SK-N-SH (cell line): ENCODE measurements at regions of chr1 and their contacts with region 1.

Region 1: GRCh38 chr1:91165033-91165654 is 143.3 kb upstream of the ZNF644 start:
- DNase-seq: peak; percentile 74
- H3K4me3 ChIP-seq: no peak overlapping the region; a peak in 1 of 4 replicates
- H3K27ac ChIP-seq: no peak overlapping the region
- H3K4me1 ChIP-seq: no peaks in the 10 kb centered on the region
- H3K27me3 ChIP-seq: no peaks in the 10 kb centered on the region
- CTCF ChIP-seq: peak; percentile 92
- EP300 ChIP-seq: no peak
- RAD21 ChIP-seq: peak; percentile 71

Region 2: GRCh38 chr1:90721210-90722194 is 443.6 kb before region 1 on chr1:
- CTCF ChIA-PET with region 1: interaction called, 18 read pairs
- POLR2A ChIA-PET with region 1: no interaction called
- DNase-seq: peak; percentile 81
- H3K4me3 ChIP-seq: no peak overlapping the region; a peak in 1 of 4 replicates
- H3K27ac ChIP-seq: no peak overlapping the region
- H3K4me1 ChIP-seq: peaks cover 3 to 12% of the 10 kb centered on the region in 2 experiments; a peak in 2 of 4 replicates
- H3K27me3 ChIP-seq: peaks cover 90% of the 10 kb centered on the region
- CTCF ChIP-seq: peak; percentile 85
- EP300 ChIP-seq: no peak
- RAD21 ChIP-seq: peak; percentile 72

Region 3: GRCh38 chr1:91135799-91136198 is 29.3 kb before region 1 on chr1:
- CTCF ChIA-PET with region 1: interaction called, 20 read pairs
- POLR2A ChIA-PET with region 1: no interaction called
- DNase-seq: no peak
- H3K4me3 ChIP-seq: no peak overlapping the region
- H3K27ac ChIP-seq: no peak overlapping the region
- H3K4me1 ChIP-seq: no peaks in the 10 kb centered on the region
- H3K27me3 ChIP-seq: no peaks in the 10 kb centered on the region; the same call in 1 of the 2 replicates
- CTCF ChIP-seq: no peak
- EP300 ChIP-seq: no peak
- RAD21 ChIP-seq: no peak

Region 4: GRCh38 chr1:91153341-91153740 is 11.8 kb before region 1 on chr1:
- CTCF ChIA-PET with region 1: interaction called, 29 read pairs
- POLR2A ChIA-PET with region 1: no interaction called
- DNase-seq: no peak
- H3K4me3 ChIP-seq: no peak overlapping the region
- H3K27ac ChIP-seq: no peak overlapping the region
- H3K4me1 ChIP-seq: no peaks in the 10 kb centered on the region
- H3K27me3 ChIP-seq: no peaks in the 10 kb centered on the region; the same call in 1 of the 2 replicates
- CTCF ChIP-seq: no peak
- EP300 ChIP-seq: no peak
- RAD21 ChIP-seq: no peak

Region 5: DNA sequence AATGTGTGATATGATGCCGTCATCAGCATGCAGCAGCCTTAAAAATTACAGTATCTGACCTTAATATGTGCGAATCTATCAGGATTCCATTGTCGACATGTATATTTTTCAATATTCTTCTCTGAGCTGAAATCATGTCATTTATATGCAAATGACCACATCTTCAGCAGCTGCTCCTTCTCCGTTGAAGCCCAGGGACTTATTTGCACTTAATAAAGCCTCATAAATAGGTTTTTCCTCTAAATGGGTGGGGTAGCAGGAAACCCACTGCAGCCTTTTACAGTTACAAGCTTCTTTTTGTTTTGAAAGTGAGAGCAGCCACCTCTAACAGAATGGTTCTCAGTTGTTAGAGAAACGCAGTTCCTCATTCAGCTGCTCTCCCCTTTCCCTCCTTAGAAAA is 35.5 kb after region 1 on chr1:
- CTCF ChIA-PET with region 1: interaction called, 27 read pairs
- POLR2A ChIA-PET with region 1: no interaction called
- DNase-seq: no peak
- H3K4me3 ChIP-seq: no peak overlapping the region
- H3K27ac ChIP-seq: no peak overlapping the region
- H3K4me1 ChIP-seq: no peaks in the 10 kb centered on the region
- H3K27me3 ChIP-seq: peaks cover 4% of the 10 kb centered on the region; the same call in 1 of the 2 replicates
- CTCF ChIP-seq: no peak
- EP300 ChIP-seq: no peak
- RAD21 ChIP-seq: no peak

Region 6: GRCh38 chr1:91273875-91274274 is 108.7 kb after region 1 on chr1:
- CTCF ChIA-PET with region 1: interaction called, 49 read pairs
- POLR2A ChIA-PET with region 1: no interaction called
- DNase-seq: no peak
- H3K4me3 ChIP-seq: no peak overlapping the region
- H3K27ac ChIP-seq: no peak overlapping the region
- H3K4me1 ChIP-seq: no peaks in the 10 kb centered on the region
- H3K27me3 ChIP-seq: no peaks in the 10 kb centered on the region
- CTCF ChIP-seq: no peak
- EP300 ChIP-seq: no peak
- RAD21 ChIP-seq: no peak

Region 7: DNA sequence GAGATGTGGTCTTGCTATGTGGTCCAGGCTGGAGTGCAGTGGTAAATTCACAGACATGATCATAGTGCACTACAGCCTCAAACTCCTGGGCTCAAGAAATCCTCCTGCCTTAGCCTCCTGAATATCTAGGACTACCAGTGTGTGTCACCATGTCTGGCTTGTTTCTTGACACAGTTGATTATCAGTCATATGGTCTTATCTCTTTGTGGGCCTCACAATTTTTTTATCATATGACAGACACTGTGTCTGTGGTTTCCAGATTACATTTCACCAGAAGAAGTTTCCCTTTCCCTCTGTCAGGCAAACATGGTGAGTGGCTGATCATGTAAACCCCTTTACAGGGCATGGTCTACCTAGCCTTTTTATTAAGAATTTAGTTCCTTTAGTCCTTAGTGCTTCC is 143.4 kb after region 1 on chr1:
- CTCF ChIA-PET with region 1: no interaction called
- POLR2A ChIA-PET with region 1: no interaction called
- DNase-seq: no peak
- H3K4me3 ChIP-seq: no peak overlapping the region
- H3K27ac ChIP-seq: no peak overlapping the region
- H3K4me1 ChIP-seq: no peaks in the 10 kb centered on the region
- H3K27me3 ChIP-seq: no peaks in the 10 kb centered on the region
- CTCF ChIP-seq: no peak
- EP300 ChIP-seq: no peak
- RAD21 ChIP-seq: no peak